Activated CD4-positive, alpha-beta memory T cell treated with anti-CD3 and anti-CD28 coated beads for 36 hours (primary cell): ENCODE measurements at regions of chr1 and their contacts with region 1.

Region 1: GRCh38 chr1:11979851-11980675 is at the start of gene MFN2:
- DNase-seq: peak; percentile 95
- H3K4me3 Mint-ChIP-seq: peak within 1 kb of the TSS; percentile 90
- H3K27ac Mint-ChIP-seq: peak within 1 kb of the TSS; percentile 90
- H3K4me1 Mint-ChIP-seq: peaks cover 41% of the 10 kb centered on the region
- H3K27me3 Mint-ChIP-seq: no peaks in the 10 kb centered on the region
- total RNA-seq, gene MFN2: 52.0 to 58.1 TPM

Region 2: GRCh38 chr1:11838349-11839272 is 141.5 kb before region 1 on chr1:
- CTCF ChIA-PET with region 1: interaction called, 4 read pairs
- POLR2A ChIA-PET with region 1: no interaction called
- intact Hi-C with region 1: loop called (anchors 10 kb)
- DNase-seq: peak; percentile 81
- H3K4me3 Mint-ChIP-seq: no peak overlapping the region
- H3K27ac Mint-ChIP-seq: no peak overlapping the region
- H3K4me1 Mint-ChIP-seq: no peaks in the 10 kb centered on the region
- H3K27me3 Mint-ChIP-seq: no peaks in the 10 kb centered on the region

Region 3: GRCh38 chr1:11925938-11926292 is 54.1 kb before region 1 on chr1:
- CTCF ChIA-PET with region 1: no interaction called
- POLR2A ChIA-PET with region 1: interaction called, 4 read pairs
- intact Hi-C with region 1: loop called (anchors 2 kb)
- DNase-seq: peak; percentile 29
- H3K4me3 Mint-ChIP-seq: no peak overlapping the region
- H3K27ac Mint-ChIP-seq: no peak overlapping the region
- H3K4me1 Mint-ChIP-seq: peaks cover 33% of the 10 kb centered on the region
- H3K27me3 Mint-ChIP-seq: no peaks in the 10 kb centered on the region

Region 4: GRCh38 chr1:12019858-12020509 is 39.9 kb after region 1 on chr1:
- CTCF ChIA-PET with region 1: no interaction called
- POLR2A ChIA-PET with region 1: no interaction called
- intact Hi-C with region 1: loop called (anchors 2 kb)
- DNase-seq: peak; percentile 14
- H3K4me3 Mint-ChIP-seq: peak overlapping the region; percentile 80
- H3K27ac Mint-ChIP-seq: peak overlapping the region; percentile 72
- H3K4me1 Mint-ChIP-seq: peaks cover 9% of the 10 kb centered on the region
- H3K27me3 Mint-ChIP-seq: no peaks in the 10 kb centered on the region

Region 5: GRCh38 chr1:12067900-12068821 is 88.1 kb after region 1 on chr1:
- CTCF ChIA-PET with region 1: no interaction called
- POLR2A ChIA-PET with region 1: no interaction called
- intact Hi-C with region 1: no loop called
- DNase-seq: peak; percentile 89
- H3K4me3 Mint-ChIP-seq: peak overlapping the region; percentile 69
- H3K27ac Mint-ChIP-seq: peak overlapping the region; percentile 96
- H3K4me1 Mint-ChIP-seq: peaks cover 62% of the 10 kb centered on the region
- H3K27me3 Mint-ChIP-seq: peaks cover 32% of the 10 kb centered on the region

Region 6: GRCh38 chr1:12087797-12088314 is 107.8 kb after region 1 on chr1:
- CTCF ChIA-PET with region 1: no interaction called
- POLR2A ChIA-PET with region 1: no interaction called
- intact Hi-C with region 1: no loop called
- DNase-seq: peak; percentile 77
- H3K4me3 Mint-ChIP-seq: peak overlapping the region; percentile 43
- H3K27ac Mint-ChIP-seq: peak overlapping the region; percentile 90
- H3K4me1 Mint-ChIP-seq: peaks cover 46% of the 10 kb centered on the region
- H3K27me3 Mint-ChIP-seq: no peaks in the 10 kb centered on the region